ENCODE measurements at regions of chr18 and their contacts with region 1.

Region 1: DNA sequence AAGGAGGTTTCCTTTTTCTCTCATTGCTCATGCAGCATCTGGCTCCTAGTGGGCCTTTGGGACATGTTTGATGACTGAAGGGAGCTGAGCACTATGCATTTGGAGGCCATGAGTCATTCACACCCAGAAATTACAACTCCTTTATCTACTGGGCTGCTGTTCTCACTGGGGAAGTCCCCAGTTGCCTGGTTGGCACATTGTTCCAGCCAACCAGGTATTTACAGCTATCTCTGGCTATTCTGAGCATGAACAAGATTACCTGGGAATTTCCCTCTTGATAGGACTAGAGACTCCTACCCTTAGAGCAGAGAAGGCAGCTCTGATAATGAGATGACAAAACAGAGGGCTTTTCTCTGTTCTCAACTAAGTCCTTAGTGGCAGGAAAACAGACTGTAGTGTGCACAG is 206.5 kb downstream of the SETBP1 start:
- DNase-seq: peak in 2 of 5 donors; percentile 34 to 41
- ATAC-seq: peak; percentile 92 to 96 (median 94)
- H3K4me3 ChIP-seq: no peak overlapping the region
- H3K27ac ChIP-seq: peak overlapping the region in 1 of 12 donors; percentile 11
- H3K4me1 ChIP-seq: peaks cover 0 to 44% (median 15%) of the 10 kb centered on the region in 12 donors
- H3K27me3 ChIP-seq: peaks cover 0 to 3% (median 0%) of the 10 kb centered on the region in 9 donors
- CTCF ChIP-seq: peak in 2 of 12 donors; percentile 7 to 12
- POLR2A ChIP-seq: no peak

Region 2: GRCh38 chr18:44750774-44751173 is 136.5 kb before region 1 on chr18:
- intact Hi-C with region 1: no loop called
- DNase-seq: no peak
- ATAC-seq: no peak
- H3K4me3 ChIP-seq: no peak overlapping the region
- H3K27ac ChIP-seq: no peak overlapping the region
- H3K4me1 ChIP-seq: peaks cover 0 to 15% (median 8%) of the 10 kb centered on the region in 12 donors
- H3K27me3 ChIP-seq: peaks cover 0 to 14% (median 0%) of the 10 kb centered on the region in 9 donors
- CTCF ChIP-seq: no peak
- POLR2A ChIP-seq: no peak

Region 3: GRCh38 chr18:44803019-44803650 is 84.1 kb before region 1 on chr18:
- intact Hi-C with region 1: loop called in 1 of 10 experiments (anchors 10 kb)
- DNase-seq: peak in 3 of 5 donors; percentile 38 to 55 (median 39)
- ATAC-seq: peak; percentile 85 to 95 (median 90)
- H3K4me3 ChIP-seq: no peak overlapping the region
- H3K27ac ChIP-seq: peak overlapping the region in 11 of 12 donors; percentile 1 to 87 (median 58)
- H3K4me1 ChIP-seq: peaks cover 0 to 70% (median 40%) of the 10 kb centered on the region in 12 donors
- H3K27me3 ChIP-seq: no peaks in the 10 kb centered on the region
- CTCF ChIP-seq: no peak
- POLR2A ChIP-seq: no peak

Region 4: GRCh38 chr18:44852818-44853217 is 34.4 kb before region 1 on chr18:
- intact Hi-C with region 1: no loop called
- DNase-seq: peak in 2 of 5 donors; percentile 32 to 49
- ATAC-seq: peak; percentile 76 to 91 (median 85)
- H3K4me3 ChIP-seq: no peak overlapping the region
- H3K27ac ChIP-seq: peak overlapping the region in 1 of 12 donors; percentile 32
- H3K4me1 ChIP-seq: peaks cover 0 to 52% (median 26%) of the 10 kb centered on the region in 12 donors
- H3K27me3 ChIP-seq: no peaks in the 10 kb centered on the region
- CTCF ChIP-seq: no peak
- POLR2A ChIP-seq: no peak